GM12878 (cell line): ENCODE measurements at regions of chr20 and their contacts with region 1.

Region 1: GRCh38 chr20:2470423-2471193 is at the start of gene SNRPB:
- DNase-seq: peak; percentile 94
- ATAC-seq: peak; percentile 97
- H3K4me3 ChIP-seq: peak within 1 kb of the TSS; percentile 91
- H3K27ac ChIP-seq: peak within 1 kb of the TSS; percentile 94
- H3K4me1 ChIP-seq: no peaks in the 10 kb centered on the region
- H3K27me3 ChIP-seq: no peaks in the 10 kb centered on the region
- CTCF ChIP-seq: no peak
- EP300 ChIP-seq: no peak
- POLR2A ChIP-seq: peak; percentile 95
- RAD21 ChIP-seq: no peak
- polyA plus RNA-seq, gene SNRPB: 15.0 to 108 TPM

Region 2: DNA sequence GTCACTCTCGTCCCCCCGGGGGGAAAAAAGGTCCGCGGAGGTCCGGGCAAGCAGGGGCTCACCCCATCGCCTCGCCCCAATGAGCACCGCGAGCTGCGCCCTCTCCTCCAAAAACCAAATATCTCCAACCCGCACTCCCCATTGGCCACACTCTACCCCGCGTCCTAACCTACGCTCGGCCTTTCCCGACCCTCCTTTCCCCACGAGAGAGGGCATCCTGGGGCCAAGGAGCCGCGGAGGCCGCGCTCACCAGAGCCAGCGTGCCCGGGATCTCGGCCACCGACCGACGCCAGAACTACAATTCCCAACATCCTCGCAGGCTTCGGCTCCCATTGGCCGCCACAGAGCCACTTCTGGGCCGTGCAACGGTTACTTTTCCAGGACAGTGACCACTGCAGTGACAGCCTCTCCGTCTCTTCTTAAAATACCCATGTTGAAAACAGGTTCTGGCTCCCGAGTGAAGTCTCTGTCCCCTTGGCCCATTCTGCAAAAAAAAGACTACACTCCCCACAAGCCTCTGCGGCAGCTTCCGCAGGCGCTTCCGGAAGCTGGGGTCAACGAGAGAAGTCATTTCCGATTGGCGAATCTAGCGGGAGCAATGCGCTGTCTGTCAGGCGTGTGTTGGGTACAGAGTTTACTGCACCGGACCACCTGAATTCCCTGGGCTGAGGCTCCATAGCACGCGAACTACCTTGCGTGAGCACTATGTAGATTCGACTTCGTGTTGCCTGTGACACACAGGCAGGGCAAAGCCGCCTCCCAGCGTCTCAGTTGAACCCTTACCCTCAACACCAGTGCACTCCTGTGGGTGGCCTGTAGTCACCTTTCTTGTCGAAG is 38.2 kb after region 1 on chr20 and contains the start of gene ZNF343:
- CTCF ChIA-PET with region 1: interaction called, 4 read pairs
- POLR2A ChIA-PET with region 1: interaction called, 12 read pairs
- RAD21 ChIA-PET with region 1: interaction called, 3 read pairs
- SMC1A ChIA-PET with region 1: interaction called, 10 read pairs
- in situ Hi-C with region 1: no loop called
- intact Hi-C with region 1: loop called (anchors 5 kb)
- DNase-seq: peak; percentile 58
- ATAC-seq: peak; percentile 97
- H3K4me3 ChIP-seq: peak within 1 kb of the TSS; percentile 86
- H3K27ac ChIP-seq: peak within 1 kb of the TSS; percentile 79
- H3K4me1 ChIP-seq: peaks cover 6% of the 10 kb centered on the region; the same call in 1 of the 2 replicates
- H3K27me3 ChIP-seq: 0 out of 4 replicates have a peak, but pooled peaks cover 0 to 1% of the 10 kb centered on the region in 2 experiments
- CTCF ChIP-seq: no peak
- EP300 ChIP-seq: 0 out of 4 replicates have a peak, but pooled peaks of 1 of the 2 experiments have one; percentile 20
- POLR2A ChIP-seq: peak; percentile 82
- RAD21 ChIP-seq: no peak
- polyA plus RNA-seq, gene ZNF343: 1.3 to 3.3 TPM

Region 3: GRCh38 chr20:2663887-2664719 is 193.5 kb after region 1 on chr20 and contains the start of gene IDH3B:
- CTCF ChIA-PET with region 1: no interaction called
- POLR2A ChIA-PET with region 1: no interaction called
- RAD21 ChIA-PET with region 1: no interaction called
- SMC1A ChIA-PET with region 1: no interaction called
- in situ Hi-C with region 1: no loop called
- intact Hi-C with region 1: no loop called
- DNase-seq: no peak
- ATAC-seq: peak; percentile 95
- H3K4me3 ChIP-seq: peak within 1 kb of the TSS; percentile 100
- H3K27ac ChIP-seq: peak within 1 kb of the TSS; percentile 81
- H3K4me1 ChIP-seq: peaks cover 3% of the 10 kb centered on the region; the same call in 1 of the 2 replicates
- H3K27me3 ChIP-seq: peaks cover 0 to 2% of the 10 kb centered on the region in 2 experiments; a peak in 1 of 4 replicates
- CTCF ChIP-seq: no peak
- EP300 ChIP-seq: no peak
- POLR2A ChIP-seq: peak; percentile 94
- RAD21 ChIP-seq: no peak
- polyA plus RNA-seq, gene IDH3B: 65.3 to 87.1 TPM